ENCODE measurements at regions of chr6 and their contacts with region 1.

Region 1: GRCh38 chr6:130697995-130698535 is 129.1 kb upstream of the SMLR1 start:
- DNase-seq: peak; percentile 60
- CTCF ChIP-seq: peak; percentile 75

Region 2: DNA sequence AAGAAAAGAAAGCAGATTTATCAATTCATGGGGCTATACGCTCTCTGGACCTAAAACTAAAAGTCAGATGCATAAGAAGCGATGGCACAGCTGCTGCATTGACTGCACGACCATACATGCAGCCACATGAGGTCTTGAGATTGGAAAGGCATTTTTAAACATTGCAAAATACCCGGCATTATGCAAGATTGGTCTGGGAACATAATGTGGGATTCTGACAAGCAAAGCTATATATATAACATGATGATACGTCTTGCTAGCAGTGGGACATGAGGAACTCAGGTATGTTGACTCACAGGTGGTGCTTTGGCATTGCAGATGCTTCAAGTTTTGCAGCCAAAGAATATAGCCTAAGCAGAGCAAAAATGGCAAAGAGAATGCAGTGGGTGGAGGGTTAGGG is 530.4 kb before region 1 on chr6:
- CTCF ChIA-PET with region 1: no interaction called
- POLR2A ChIA-PET with region 1: no interaction called
- DNase-seq: no peak
- CTCF ChIP-seq: no peak

Region 3: DNA sequence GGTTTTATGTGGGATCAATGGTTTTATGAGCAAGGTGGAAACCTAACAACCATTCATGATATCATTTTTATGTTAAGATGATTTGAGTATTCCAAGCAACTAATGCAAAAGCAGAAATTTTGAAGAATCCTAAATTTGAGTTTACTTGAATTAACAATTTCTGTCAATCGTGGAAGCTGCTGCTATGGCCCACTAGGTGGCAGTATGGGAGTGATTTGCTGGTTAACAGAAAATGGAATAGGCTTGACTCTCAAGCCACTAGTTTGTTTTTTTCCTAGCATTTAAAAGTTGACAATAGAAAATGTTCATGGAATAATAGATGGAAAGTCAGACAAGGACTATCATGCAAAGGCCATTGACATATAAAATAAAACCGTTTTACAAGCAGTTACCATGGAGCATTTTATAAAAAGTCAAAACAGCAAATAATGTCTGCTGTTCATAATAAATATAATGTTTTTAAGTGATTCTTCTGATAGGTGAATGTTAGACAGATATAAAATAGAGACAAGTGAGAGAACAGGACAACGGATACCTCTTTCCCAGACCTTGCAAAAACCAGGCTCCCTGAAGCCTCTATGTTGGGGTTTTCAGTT is 375.3 kb before region 1 on chr6:
- CTCF ChIA-PET with region 1: interaction called, 53 read pairs
- POLR2A ChIA-PET with region 1: no interaction called
- DNase-seq: peak; percentile 31
- CTCF ChIP-seq: peak; percentile 89

Region 4: DNA sequence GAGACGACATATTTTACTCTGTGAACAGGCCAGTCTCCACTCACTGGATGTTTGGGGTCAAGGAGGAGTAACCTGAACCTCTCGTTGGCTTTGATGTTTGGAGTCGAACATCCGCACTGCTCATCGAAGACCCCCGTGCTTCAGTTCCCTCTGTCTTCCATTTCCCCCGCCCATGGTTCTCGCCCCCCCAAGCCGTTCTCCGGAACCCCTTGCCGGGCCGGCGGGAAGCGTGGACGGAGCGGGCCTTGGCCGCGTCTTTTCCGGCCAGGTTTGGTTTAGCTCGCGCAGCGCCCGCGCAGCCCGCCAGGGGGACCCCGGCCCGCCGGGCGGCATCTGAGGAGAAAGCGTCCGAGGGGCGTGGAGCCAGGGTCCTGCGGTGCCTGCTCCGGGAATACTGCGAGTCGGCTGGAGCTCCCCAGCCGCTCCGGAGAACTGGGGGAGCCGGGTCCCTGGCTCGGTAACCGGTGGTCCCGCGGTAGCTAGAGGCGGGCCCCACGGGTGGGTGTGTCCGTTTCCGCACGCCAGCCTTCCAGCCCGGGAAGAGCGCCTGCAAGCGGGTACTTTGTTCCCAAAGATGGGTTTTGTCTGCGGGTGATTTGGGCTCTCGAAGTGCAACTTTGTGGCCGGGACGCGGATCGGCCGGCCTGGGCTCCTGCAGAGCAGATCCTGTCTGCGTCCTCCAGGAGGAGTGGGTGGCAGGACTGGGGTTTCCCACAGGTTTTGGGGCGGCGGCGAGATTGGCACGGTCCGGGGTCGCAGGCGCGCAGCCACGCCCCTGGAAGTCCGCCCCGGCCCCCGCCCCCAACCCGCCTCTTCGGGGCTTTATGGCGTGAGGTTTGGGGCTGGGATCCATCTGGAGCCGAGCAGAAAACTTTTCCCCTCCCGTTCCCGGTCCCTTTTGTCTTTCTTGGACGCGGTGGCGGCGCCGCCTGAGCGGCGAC is 332.6 kb before region 1 on chr6 and contains the start of gene TMEM200A:
- CTCF ChIA-PET with region 1: interaction called, 13 read pairs
- POLR2A ChIA-PET with region 1: no interaction called
- DNase-seq: peak; percentile 70
- CTCF ChIP-seq: peak; percentile 69

Region 5: DNA sequence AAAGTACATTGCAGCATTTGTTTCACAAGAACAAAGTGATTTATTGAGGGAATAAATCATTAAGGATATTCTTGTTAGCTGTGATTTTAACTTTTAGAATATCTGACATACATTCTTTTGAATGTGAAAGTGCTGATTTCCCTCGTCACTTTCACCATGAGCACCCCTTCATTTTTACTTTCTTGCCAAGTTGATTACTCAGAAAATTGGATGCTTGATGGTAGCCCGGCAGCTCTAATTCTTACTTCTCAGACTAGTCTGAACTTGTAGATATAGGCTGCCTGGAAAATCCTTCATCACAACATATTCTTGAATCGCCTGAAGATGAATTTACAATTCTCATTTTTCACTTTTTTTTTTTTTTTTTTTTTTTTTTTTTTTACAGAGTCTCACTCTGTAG is 17.9 kb before region 1 on chr6:
- CTCF ChIA-PET with region 1: interaction called, 10 read pairs
- POLR2A ChIA-PET with region 1: no interaction called
- DNase-seq: no peak
- CTCF ChIP-seq: no peak